HepG2 (cell line): ENCODE measurements at regions of chr3 and their contacts with region 1.

Region 1: GRCh38 chr3:146991907-146992306 is 386.8 kb upstream of the PLSCR5 start:
- DNase-seq: no peak
- ATAC-seq: no peak
- H3K4me3 ChIP-seq: no peak overlapping the region
- H3K27ac ChIP-seq: no peak overlapping the region
- H3K4me1 ChIP-seq: no peaks in the 10 kb centered on the region
- H3K27me3 ChIP-seq: no peaks in the 10 kb centered on the region
- CTCF ChIP-seq: no peak
- EP300 ChIP-seq: no peak
- POLR2A ChIP-seq: no peak
- RAD21 ChIP-seq: no peak

Region 2: GRCh38 chr3:148360051-148360450 is 1368.1 kb after region 1 on chr3:
- CTCF ChIA-PET with region 1: no interaction called
- POLR2A ChIA-PET with region 1: no interaction called
- in situ Hi-C with region 1: no loop called
- intact Hi-C with region 1: loop called (anchors 5 kb)
- DNase-seq: no peak
- ATAC-seq: no peak
- H3K4me3 ChIP-seq: no peak overlapping the region
- H3K27ac ChIP-seq: no peak overlapping the region
- H3K4me1 ChIP-seq: no peaks in the 10 kb centered on the region
- H3K27me3 ChIP-seq: no peaks in the 10 kb centered on the region; a peak in 1 of 5 replicates
- CTCF ChIP-seq: no peak
- EP300 ChIP-seq: no peak
- POLR2A ChIP-seq: no peak
- RAD21 ChIP-seq: no peak